Activated naive CD4-positive, alpha-beta T cell treated with anti-CD3 and anti-CD28 coated beads, Interleukin-2, amount 10 ng/mL, durations not matched to agents 7 days and 5 days (primary cell): ENCODE measurements at regions of chr11 and their contacts with region 1.

Region 1: GRCh38 chr11:67288452-67289225 is 464 bp upstream of the ANKRD13D start:
- DNase-seq: peak; percentile 94
- H3K4me3 Mint-ChIP-seq: peak overlapping the region; percentile 77
- H3K27ac Mint-ChIP-seq: peak overlapping the region; percentile 99
- H3K4me1 Mint-ChIP-seq: peaks cover 78% of the 10 kb centered on the region
- H3K27me3 Mint-ChIP-seq: peaks cover 12% of the 10 kb centered on the region

Region 2: GRCh38 chr11:67245021-67245420 is 43.6 kb before region 1 on chr11:
- CTCF ChIA-PET with region 1: no interaction called
- DNase-seq: no peak
- H3K4me3 Mint-ChIP-seq: no peak overlapping the region
- H3K27ac Mint-ChIP-seq: peak overlapping the region; percentile 3
- H3K4me1 Mint-ChIP-seq: peaks cover 32% of the 10 kb centered on the region
- H3K27me3 Mint-ChIP-seq: no peaks in the 10 kb centered on the region

Region 3: DNA sequence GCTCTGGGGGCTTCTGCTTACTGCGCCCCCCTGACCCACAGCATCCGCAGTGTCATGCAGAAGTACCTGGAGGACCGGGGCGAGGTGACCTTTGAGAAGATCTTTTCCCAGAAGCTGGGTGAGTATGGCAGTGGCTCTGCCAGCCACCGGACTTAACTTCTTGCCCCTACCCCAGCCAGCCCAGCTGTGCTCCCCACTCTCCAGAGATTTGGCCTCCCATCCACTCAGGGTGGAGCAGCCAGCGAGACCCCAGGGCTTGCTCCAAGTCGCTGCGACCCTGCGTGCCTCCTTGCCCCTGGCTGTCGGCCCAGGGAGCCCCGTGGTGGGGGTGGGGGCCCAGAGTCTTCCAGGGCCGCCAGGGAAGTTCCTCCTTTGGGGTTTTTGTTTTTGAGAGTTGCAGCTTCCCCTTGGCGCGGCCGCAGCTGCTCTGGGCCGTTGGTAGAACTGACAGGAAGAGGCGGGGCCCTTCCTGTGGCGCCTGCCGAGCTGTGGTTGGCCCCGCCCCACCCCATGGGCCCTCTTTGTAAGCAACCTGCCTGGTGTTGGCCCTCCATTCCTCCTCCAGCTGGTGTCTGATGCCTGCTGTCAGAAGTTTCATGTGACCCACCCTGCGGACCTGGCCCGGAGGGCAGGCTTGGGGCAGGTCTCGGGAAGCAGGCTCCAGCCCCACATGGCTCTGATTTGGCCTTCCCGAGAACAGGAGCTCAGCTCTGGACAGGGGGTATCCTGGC is 11.2 kb before region 1 on chr11:
- CTCF ChIA-PET with region 1: interaction called, 17 read pairs
- DNase-seq: peak; percentile 95
- H3K4me3 Mint-ChIP-seq: peak overlapping the region; percentile 74
- H3K27ac Mint-ChIP-seq: peak overlapping the region; percentile 94
- H3K4me1 Mint-ChIP-seq: peaks cover 84% of the 10 kb centered on the region
- H3K27me3 Mint-ChIP-seq: no peaks in the 10 kb centered on the region